A549 (cell line): ENCODE measurements at regions of chr10 and their contacts with region 1.

Region 1: DNA sequence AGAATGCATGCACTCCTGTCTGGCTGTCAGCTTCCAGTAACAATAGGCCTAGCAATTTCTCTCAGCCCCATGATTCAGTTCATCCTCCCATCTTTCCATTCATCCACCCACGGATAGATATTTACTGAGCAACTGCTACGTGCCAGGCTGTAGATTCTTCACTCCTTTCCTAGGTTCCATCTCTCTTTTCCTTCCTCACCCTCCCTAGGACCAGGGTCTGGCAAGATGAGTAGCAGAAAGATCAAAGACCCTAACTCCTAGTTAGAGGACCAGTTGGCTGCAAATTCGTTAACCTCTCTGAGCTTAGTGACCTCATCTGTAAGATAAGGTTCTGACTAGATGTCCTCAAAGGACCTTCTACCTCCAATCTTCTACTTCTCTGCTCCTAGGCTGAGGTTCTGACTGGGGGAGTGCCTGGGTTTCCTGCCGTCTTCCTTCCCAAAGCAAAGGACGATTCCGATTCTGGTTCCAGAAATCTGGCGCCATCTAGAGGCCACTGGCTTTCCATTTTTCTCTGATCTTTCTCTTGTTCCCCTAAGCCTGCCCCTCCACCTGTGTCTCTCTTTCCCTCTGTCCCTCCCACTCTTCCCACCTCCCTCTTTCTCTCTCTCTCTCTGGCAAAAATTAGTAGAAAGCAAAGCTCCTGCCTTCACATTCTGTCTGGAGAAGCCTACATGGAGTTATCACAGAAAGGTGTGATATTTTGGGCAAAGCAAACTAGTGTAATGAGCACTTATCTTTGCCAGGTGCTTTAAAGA is 26.2 kb downstream of the TBATA start:
- DNase-seq: peak; percentile 59 to 67
- ATAC-seq: peak; percentile 45 to 80
- H3K4me3 ChIP-seq: no peak overlapping the region
- H3K27ac ChIP-seq: no peak overlapping the region
- H3K4me1 ChIP-seq: 0 out of 3 replicates have a peak, but pooled peaks cover 5% of the 10 kb centered on the region
- CTCF ChIP-seq: peak; percentile 75
- EP300 ChIP-seq: no peak
- POLR2A ChIP-seq: no peak
- RAD21 ChIP-seq: peak; percentile 71 to 81

Region 2: GRCh38 chr10:70461215-70461986 is 297.5 kb before region 1 on chr10:
- CTCF ChIA-PET with region 1: interaction called, 31 read pairs
- POLR2A ChIA-PET with region 1: no interaction called
- DNase-seq: peak; percentile 64 to 87
- ATAC-seq: peak; percentile 88 to 91
- H3K4me3 ChIP-seq: no peak overlapping the region
- H3K27ac ChIP-seq: no peak overlapping the region
- H3K4me1 ChIP-seq: peaks cover 5% of the 10 kb centered on the region
- CTCF ChIP-seq: peak; percentile 84
- EP300 ChIP-seq: no peak
- POLR2A ChIP-seq: no peak
- RAD21 ChIP-seq: peak; percentile 88 to 92

Region 3: GRCh38 chr10:70549962-70550458 is 208.9 kb before region 1 on chr10:
- CTCF ChIA-PET with region 1: interaction called, 129 read pairs
- POLR2A ChIA-PET with region 1: no interaction called
- DNase-seq: peak; percentile 60 to 78
- ATAC-seq: peak; percentile 84 to 95
- H3K4me3 ChIP-seq: no peak overlapping the region
- H3K27ac ChIP-seq: no peak overlapping the region
- H3K4me1 ChIP-seq: no peaks in the 10 kb centered on the region
- CTCF ChIP-seq: peak; percentile 87
- EP300 ChIP-seq: no peak
- POLR2A ChIP-seq: no peak
- RAD21 ChIP-seq: peak; percentile 89

Region 4: GRCh38 chr10:70662362-70663220 is 96.3 kb before region 1 on chr10:
- CTCF ChIA-PET with region 1: no interaction called
- POLR2A ChIA-PET with region 1: no interaction called
- DNase-seq: no peak
- ATAC-seq: no peak
- H3K4me3 ChIP-seq: no peak overlapping the region
- H3K27ac ChIP-seq: no peak overlapping the region
- H3K4me1 ChIP-seq: no peaks in the 10 kb centered on the region
- CTCF ChIP-seq: no peak
- EP300 ChIP-seq: no peak
- POLR2A ChIP-seq: no peak
- RAD21 ChIP-seq: no peak

Region 5: GRCh38 chr10:70715853-70716795 is 42.8 kb before region 1 on chr10:
- CTCF ChIA-PET with region 1: interaction called, 19 read pairs
- POLR2A ChIA-PET with region 1: no interaction called
- DNase-seq: peak in 1 of 2 experiments; percentile 19
- ATAC-seq: peak in 1 of 2 experiments; percentile 34; a peak in 3 of 6 replicates
- H3K4me3 ChIP-seq: no peak overlapping the region
- H3K27ac ChIP-seq: no peak overlapping the region
- H3K4me1 ChIP-seq: peaks cover 8% of the 10 kb centered on the region
- CTCF ChIP-seq: no peak
- EP300 ChIP-seq: no peak
- POLR2A ChIP-seq: no peak
- RAD21 ChIP-seq: no peak

Region 6: DNA sequence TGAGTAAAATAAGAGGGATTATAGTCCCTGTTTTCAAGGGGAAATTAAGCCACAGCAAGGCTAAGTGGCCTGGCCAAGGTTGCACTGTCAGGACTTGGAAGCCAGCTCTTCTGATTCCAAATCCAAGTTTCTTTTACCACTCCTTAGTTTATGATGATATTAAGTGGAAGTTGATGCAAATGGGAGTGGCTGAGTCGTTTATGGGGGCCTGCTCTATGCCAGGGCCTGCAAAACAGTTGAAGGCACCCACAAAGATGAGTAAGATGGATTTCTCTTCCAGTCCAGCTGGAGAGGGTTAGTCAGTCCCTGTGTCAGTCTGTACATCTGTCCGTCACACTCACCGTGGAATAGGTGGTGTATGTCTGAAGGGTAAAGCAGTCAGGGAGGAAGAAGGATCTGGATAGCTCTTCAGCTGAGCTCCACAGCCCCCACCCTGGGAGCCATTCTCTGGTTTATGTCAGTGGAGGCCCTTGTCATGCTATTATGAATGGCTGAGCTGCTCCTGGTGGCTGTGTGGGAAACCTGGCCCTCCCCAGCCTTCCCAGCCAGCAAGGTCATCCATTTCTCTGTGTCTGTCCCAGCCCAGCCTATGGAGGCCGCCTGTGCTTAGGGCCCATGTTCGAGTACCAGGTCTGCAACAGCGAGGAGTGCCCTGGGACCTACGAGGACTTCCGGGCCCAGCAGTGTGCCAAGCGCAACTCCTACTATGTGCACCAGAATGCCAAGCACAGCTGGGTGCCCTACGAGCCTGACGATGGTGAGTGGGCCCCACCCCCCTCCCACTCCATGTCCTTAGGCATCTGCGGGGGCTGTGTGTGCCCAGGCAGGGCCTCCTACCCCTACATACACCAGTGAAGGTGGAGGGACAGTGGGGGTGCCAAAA is 18.3 kb before region 1 on chr10:
- CTCF ChIA-PET with region 1: interaction called, 12 read pairs
- POLR2A ChIA-PET with region 1: no interaction called
- DNase-seq: no peak
- ATAC-seq: no peak
- H3K4me3 ChIP-seq: no peak overlapping the region
- H3K27ac ChIP-seq: no peak overlapping the region
- H3K4me1 ChIP-seq: no peaks in the 10 kb centered on the region
- CTCF ChIP-seq: no peak
- EP300 ChIP-seq: no peak
- POLR2A ChIP-seq: no peak
- RAD21 ChIP-seq: no peak

Region 7: DNA sequence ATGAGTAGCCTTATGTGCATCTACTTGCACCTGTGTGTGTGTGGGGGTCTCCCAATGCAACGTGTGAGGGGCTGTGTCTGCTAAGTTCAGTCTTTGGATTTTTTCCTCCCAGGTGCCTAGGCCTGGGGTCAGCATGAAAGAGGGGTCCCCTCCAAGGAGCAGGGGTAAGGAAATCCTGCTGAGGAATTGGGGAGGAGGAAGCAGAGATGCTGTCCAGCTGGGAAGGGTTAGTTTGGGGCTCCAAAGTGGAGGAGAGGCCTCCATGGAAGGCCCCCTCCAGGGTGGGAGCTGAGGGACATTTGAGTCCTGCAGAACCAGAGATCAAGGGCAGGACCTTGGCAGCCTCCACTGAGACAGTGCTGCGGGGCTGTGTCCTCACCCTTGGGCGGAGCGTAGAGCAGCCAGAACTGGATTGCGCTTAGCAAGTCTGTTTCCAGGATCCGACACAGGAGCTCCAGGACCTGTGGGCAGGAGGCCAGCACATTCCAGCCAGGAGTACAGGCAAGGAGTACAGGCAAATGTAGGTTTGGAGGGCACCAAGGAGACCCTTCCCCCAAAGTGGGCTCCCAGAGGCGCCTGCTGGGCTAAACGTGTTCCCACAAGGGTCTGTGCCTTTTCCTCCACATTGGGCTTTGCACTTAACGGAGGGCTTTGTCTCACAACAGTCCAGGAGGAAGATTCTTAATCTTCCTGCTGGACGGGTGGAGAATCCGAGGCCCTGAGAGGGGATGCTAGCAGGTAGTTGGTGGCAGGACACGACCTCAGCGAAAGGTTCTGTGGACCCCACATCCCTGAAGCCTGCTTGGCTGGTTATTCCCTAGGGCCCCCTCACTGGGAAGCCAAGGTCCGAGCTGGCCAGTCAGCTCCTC is 16.1 kb after region 1 on chr10:
- CTCF ChIA-PET with region 1: interaction called, 41 read pairs
- POLR2A ChIA-PET with region 1: no interaction called
- DNase-seq: no peak
- ATAC-seq: no peak; a peak in 1 of 6 replicates
- H3K4me3 ChIP-seq: no peak overlapping the region
- H3K27ac ChIP-seq: no peak overlapping the region
- H3K4me1 ChIP-seq: no peaks in the 10 kb centered on the region
- CTCF ChIP-seq: no peak
- EP300 ChIP-seq: no peak
- POLR2A ChIP-seq: no peak
- RAD21 ChIP-seq: no peak

Region 8: GRCh38 chr10:70803775-70804420 is 45.0 kb after region 1 on chr10:
- CTCF ChIA-PET with region 1: no interaction called
- POLR2A ChIA-PET with region 1: no interaction called
- DNase-seq: no peak
- ATAC-seq: no peak
- H3K4me3 ChIP-seq: no peak overlapping the region
- H3K27ac ChIP-seq: no peak overlapping the region
- H3K4me1 ChIP-seq: peaks cover 5% of the 10 kb centered on the region; the same call in 1 of the 3 replicates
- CTCF ChIP-seq: no peak
- EP300 ChIP-seq: no peak
- POLR2A ChIP-seq: no peak
- RAD21 ChIP-seq: no peak